OCI-LY7 (cell line): ENCODE measurements at regions of chr11 and their contacts with region 1.

Region 1: GRCh38 chr11:123382555-123383074 is 47.5 kb upstream of the GRAMD1B start:
- DNase-seq: no peak
- H3K4me3 ChIP-seq: no peak overlapping the region
- H3K27ac ChIP-seq: no peak overlapping the region
- H3K4me1 ChIP-seq: peaks cover 8% of the 10 kb centered on the region
- CTCF ChIP-seq: no peak

Region 2: GRCh38 chr11:123338330-123339005 is 44.1 kb before region 1 on chr11:
- CTCF ChIA-PET with region 1: no interaction called
- POLR2A ChIA-PET with region 1: no interaction called
- intact Hi-C with region 1: loop called (anchors 1 kb)
- DNase-seq: no peak
- H3K4me3 ChIP-seq: no peak overlapping the region
- H3K27ac ChIP-seq: no peak overlapping the region
- H3K4me1 ChIP-seq: no peaks in the 10 kb centered on the region
- CTCF ChIP-seq: no peak

Region 3: GRCh38 chr11:123407130-123407995 is 24.7 kb after region 1 on chr11:
- CTCF ChIA-PET with region 1: no interaction called
- POLR2A ChIA-PET with region 1: no interaction called
- intact Hi-C with region 1: no loop called
- DNase-seq: peak; percentile 56
- H3K4me3 ChIP-seq: no peak overlapping the region
- H3K27ac ChIP-seq: no peak overlapping the region
- H3K4me1 ChIP-seq: peaks cover 25% of the 10 kb centered on the region
- CTCF ChIP-seq: peak; percentile 82